Mammary epithelial cell (primary cell): ENCODE measurements at regions of chr1 and their contacts with region 1.

Region 1: GRCh38 chr1:204989266-204990058 is 53.5 kb upstream of the CNTN2 start:
- DNase-seq: peak; percentile 79
- H3K4me3 ChIP-seq: no peak overlapping the region
- H3K27ac ChIP-seq: no peak overlapping the region
- H3K4me1 ChIP-seq: peaks cover 4% of the 10 kb centered on the region
- H3K27me3 ChIP-seq: no peaks in the 10 kb centered on the region
- CTCF ChIP-seq: peak; percentile 99 to 100

Region 2: GRCh38 chr1:205056188-205056611 is 66.7 kb after region 1 on chr1:
- CTCF ChIA-PET with region 1: interaction called, 33 read pairs
- dilution Hi-C with region 1: no loop called
- in situ Hi-C with region 1: loop called in 1 of 2 experiments (anchors 10 kb)
- intact Hi-C with region 1: loop called (anchors 1 kb)
- DNase-seq: peak; percentile 11
- H3K4me3 ChIP-seq: no peak overlapping the region
- H3K27ac ChIP-seq: no peak overlapping the region
- H3K4me1 ChIP-seq: no peaks in the 10 kb centered on the region
- H3K27me3 ChIP-seq: no peaks in the 10 kb centered on the region
- CTCF ChIP-seq: no peak

Region 3: GRCh38 chr1:205061665-205062069 is 72.2 kb after region 1 on chr1:
- CTCF ChIA-PET with region 1: interaction called, 33 read pairs
- dilution Hi-C with region 1: no loop called
- in situ Hi-C with region 1: loop called in 1 of 2 experiments (anchors 10 kb)
- intact Hi-C with region 1: loop called (anchors 1 kb)
- DNase-seq: peak; percentile 48
- H3K4me3 ChIP-seq: no peak overlapping the region
- H3K27ac ChIP-seq: no peak overlapping the region
- H3K4me1 ChIP-seq: no peaks in the 10 kb centered on the region
- H3K27me3 ChIP-seq: no peaks in the 10 kb centered on the region
- CTCF ChIP-seq: peak; percentile 92 to 93

Region 4: DNA sequence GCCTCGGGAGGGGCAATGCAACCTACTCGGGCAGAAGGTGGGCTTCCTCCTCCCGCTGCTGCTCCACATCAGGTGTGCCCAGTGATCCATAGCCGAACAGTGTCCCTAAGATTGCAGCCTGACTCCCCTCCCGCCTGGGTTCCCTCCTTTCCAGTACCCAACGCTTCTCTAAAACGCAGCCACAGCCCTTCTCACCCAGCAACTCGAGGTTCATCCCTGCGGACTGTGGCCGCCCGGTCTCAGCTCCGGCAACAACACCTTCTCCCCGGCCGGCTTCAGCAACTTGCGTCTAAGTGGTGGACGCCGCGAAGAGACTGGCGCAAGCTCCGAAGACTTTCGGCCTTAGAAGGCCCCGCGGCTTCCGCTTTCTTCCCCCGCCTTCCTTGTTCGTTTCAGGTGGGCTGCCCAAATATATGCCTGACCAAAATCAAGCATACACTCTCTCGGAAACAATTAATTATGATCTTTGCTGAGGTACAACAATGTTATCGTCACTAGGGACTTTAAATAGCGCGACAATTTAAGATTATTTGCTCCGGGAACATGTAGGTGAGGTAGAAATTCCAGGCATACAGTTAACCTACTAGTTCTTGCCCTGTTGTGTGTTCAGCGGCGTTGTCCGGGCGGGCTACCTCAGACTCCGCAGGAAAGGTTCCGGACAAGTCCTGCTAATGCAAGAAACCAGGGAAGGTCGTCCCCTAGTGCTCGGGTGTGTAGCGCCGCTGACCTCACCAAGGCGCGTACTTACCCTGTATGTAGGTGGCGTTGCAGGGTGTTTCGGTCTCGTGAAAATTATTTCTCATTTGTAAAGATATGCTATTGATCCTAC is 132.4 kb after region 1 on chr1 and contains the start of gene RBBP5:
- CTCF ChIA-PET with region 1: no interaction called
- dilution Hi-C with region 1: no loop called
- in situ Hi-C with region 1: loop called in 1 of 2 experiments (anchors 25 kb)
- intact Hi-C with region 1: loop called (anchors 1 kb)
- DNase-seq: peak; percentile 93
- H3K4me3 ChIP-seq: peak within 1 kb of the TSS; percentile 68 to 96 (median 85)
- H3K27ac ChIP-seq: peak within 1 kb of the TSS; percentile 99
- H3K4me1 ChIP-seq: peaks cover 12% of the 10 kb centered on the region
- H3K27me3 ChIP-seq: no peaks in the 10 kb centered on the region
- CTCF ChIP-seq: peak; percentile 67 to 85
- total RNA-seq, gene RBBP5: 15.2 to 17.5 TPM

Region 5: DNA sequence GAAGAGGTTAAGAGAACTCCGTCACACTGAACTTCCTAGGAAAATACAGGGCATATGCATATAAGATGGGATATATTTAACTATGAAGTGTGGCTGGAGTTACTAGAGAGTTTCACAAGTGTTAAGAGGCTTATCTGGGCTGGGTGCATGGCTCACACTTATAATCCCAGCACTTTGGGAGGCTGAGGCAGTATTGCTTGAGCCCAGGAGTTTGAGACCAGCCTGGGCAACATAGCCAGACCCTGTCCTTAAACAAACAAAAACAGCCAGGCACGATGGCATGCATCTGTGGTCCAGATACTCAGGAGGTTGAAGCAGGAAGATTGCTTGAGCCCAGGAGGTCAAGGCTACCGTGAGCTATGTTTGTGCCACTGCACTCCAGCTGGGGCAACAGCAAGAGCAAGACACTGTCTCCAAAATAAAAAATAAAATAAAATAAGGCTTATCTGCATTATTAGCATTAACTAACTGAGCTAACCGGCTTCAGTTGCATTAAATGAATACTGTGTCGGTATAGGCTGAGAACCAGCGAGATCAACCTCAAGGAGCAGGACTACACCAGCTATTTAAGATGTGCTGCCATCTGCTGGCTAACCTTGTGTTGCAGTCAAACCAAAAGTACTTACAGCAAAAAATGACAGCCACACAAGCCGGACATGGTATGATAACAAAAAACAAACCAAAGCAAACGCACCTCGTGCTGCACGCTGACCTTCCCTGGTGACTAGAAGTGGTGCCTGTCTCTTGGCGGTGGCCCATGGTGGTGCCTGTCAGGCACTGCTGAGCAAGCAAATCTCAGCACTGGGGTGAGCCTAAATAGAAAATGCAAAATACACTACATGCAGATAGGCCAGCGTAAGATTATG is 152.0 kb after region 1 on chr1:
- CTCF ChIA-PET with region 1: interaction called, 7 read pairs
- dilution Hi-C with region 1: no loop called
- in situ Hi-C with region 1: loop called in 1 of 2 experiments (anchors 25 kb)
- intact Hi-C with region 1: loop called (anchors 1 kb)
- DNase-seq: peak; percentile 66
- H3K4me3 ChIP-seq: no peak overlapping the region
- H3K27ac ChIP-seq: no peak overlapping the region
- H3K4me1 ChIP-seq: peaks cover 8% of the 10 kb centered on the region
- H3K27me3 ChIP-seq: no peaks in the 10 kb centered on the region
- CTCF ChIP-seq: peak; percentile 69 to 74

Region 6: DNA sequence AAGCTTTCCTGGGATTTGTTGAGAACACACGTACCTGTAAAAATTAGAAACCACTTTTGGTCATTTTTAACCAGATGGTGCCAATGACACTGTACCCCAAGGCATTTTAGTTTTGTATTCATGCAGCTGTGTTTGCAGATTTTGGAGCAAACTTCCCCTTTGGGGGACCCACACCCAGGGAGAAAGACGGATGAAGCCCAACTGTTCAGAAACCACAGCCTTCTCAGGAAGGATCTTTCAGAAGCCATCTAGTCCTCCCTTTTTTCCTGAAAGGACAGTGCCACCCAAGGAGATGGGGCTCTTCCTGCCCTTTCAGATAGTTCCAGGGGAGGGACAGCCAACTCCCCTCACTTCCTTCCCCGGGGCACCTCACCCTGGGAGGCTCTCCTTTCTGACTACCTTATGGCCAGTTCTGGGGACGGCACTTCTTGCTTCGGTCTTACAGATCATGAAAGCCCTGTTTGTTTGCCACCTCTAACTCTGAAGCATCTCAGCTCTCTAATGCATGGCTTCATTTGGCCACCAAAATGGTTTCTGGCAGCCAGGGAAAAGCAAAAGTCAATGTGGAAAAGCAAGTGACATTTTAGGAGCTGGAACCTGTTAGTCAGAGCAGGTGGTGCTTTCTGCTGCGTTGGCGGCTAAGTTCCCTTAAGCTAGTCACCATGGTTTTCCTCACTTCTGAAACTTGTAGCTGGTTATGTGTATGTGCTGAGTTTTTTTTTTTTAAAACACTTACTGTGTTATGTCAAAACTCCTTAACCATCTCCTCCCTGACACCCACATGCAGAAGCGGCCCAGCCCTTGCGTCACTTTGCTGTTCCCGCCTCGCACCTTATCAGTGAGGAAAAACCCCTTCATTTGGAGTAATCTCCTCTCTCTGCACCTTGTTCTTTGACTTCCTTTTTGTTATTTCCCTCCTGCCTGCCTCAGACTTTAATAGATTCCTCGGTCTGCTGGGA is 248.3 kb after region 1 on chr1:
- CTCF ChIA-PET with region 1: no interaction called
- dilution Hi-C with region 1: loop called (anchors 10 kb)
- in situ Hi-C with region 1: no loop called
- intact Hi-C with region 1: no loop called
- DNase-seq: no peak
- H3K4me3 ChIP-seq: no peak overlapping the region
- H3K27ac ChIP-seq: no peak overlapping the region
- H3K4me1 ChIP-seq: no peaks in the 10 kb centered on the region
- H3K27me3 ChIP-seq: no peaks in the 10 kb centered on the region
- CTCF ChIP-seq: no peak

Region 7: GRCh38 chr1:205321164-205321958 is 331.9 kb after region 1 on chr1 and contains the start of gene NUAK2:
- CTCF ChIA-PET with region 1: no interaction called
- dilution Hi-C with region 1: no loop called
- in situ Hi-C with region 1: no loop called
- intact Hi-C with region 1: loop called (anchors 2 kb)
- DNase-seq: peak; percentile 88
- H3K4me3 ChIP-seq: peak within 1 kb of the TSS; percentile 58 to 92 (median 87)
- H3K27ac ChIP-seq: peak within 1 kb of the TSS; percentile 24
- H3K4me1 ChIP-seq: peaks cover 48% of the 10 kb centered on the region
- H3K27me3 ChIP-seq: no peaks in the 10 kb centered on the region
- CTCF ChIP-seq: peak in 1 of 2 donors; percentile 42
- total RNA-seq, gene NUAK2: 11.8 TPM